H1 (cell line): ENCODE measurements at regions of chr3 and their contacts with region 1.

Region 1: DNA sequence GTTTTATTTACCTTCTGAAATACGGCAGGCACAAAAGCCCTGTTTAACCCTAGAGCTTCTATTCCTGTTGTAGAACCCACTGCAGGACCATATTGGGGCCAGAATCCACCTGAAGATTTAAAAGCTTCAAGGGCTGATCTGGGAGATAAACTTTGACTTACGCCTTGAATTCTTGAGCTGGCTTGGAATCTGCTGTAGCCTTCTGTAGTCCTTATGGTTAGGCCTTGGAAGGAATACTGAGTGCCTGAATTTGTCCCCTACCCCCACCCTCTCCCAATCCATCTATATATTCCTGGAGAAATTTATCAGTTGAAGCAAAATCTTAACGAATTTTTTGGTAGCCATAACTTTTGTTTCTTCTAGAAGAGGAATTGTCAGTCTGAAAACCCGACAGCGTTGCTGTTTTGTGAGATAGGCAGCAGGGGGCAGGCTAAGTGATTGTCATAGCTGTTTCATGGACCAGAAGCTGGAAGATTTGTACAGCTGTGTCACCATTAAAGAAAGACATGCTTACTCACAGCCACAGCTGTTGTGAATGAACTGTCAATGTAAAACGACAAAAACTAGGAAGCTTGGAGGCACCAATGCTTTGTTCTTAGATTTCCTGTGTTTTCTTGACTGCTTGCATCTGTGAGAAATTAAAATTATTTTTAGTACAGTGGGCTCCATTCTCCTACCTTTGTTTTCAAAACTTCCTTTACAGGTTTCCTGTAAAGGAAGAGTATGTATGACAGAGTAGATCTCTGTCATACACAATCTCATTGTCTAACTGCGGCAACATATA is 12.8 kb downstream of the LXN start:
- DNase-seq: peak in 1 of 2 experiments; percentile 64
- H3K4me3 ChIP-seq: no peak overlapping the region
- H3K27ac ChIP-seq: no peak overlapping the region
- H3K4me1 ChIP-seq: no peaks in the 10 kb centered on the region
- H3K27me3 ChIP-seq: no peaks in the 10 kb centered on the region
- CTCF ChIP-seq: peak; percentile 33 to 62 (median 46)
- EP300 ChIP-seq: no peak
- POLR2A ChIP-seq: no peak
- RAD21 ChIP-seq: peak; percentile 16 to 49; a peak in 3 of 4 replicates

Region 2: GRCh38 chr3:158672293-158673176 is 12.9 kb after region 1 on chr3 and contains the start of gene LXN:
- CTCF ChIA-PET with region 1: interaction called, 16 read pairs
- POLR2A ChIA-PET with region 1: no interaction called
- DNase-seq: peak; percentile 85
- H3K4me3 ChIP-seq: peak within 1 kb of the TSS; percentile 46 to 82 (median 80)
- H3K27ac ChIP-seq: peak within 1 kb of the TSS; percentile 64; the same call in 1 of the 2 replicates
- H3K4me1 ChIP-seq: peaks cover 0 to 7% (median 0%) of the 10 kb centered on the region in 4 experiments; a peak in 1 of 7 replicates
- H3K27me3 ChIP-seq: no peaks in the 10 kb centered on the region
- CTCF ChIP-seq: peak; percentile 85 to 99 (median 94)
- EP300 ChIP-seq: no peak
- POLR2A ChIP-seq: peak in 1 of 2 experiments; percentile 77; a peak in 2 of 3 replicates
- RAD21 ChIP-seq: peak; percentile 33 to 60; a peak in 3 of 4 replicates
- total RNA-seq, gene LXN: 3.9 and 4.7 TPM in 2 replicates

Region 3: GRCh38 chr3:158801696-158802408 is 142.2 kb after region 1 on chr3 and contains the start of gene MFSD1:
- CTCF ChIA-PET with region 1: interaction called, 10 read pairs
- POLR2A ChIA-PET with region 1: no interaction called
- DNase-seq: peak in 1 of 2 experiments; percentile 89
- H3K4me3 ChIP-seq: peak within 1 kb of the TSS; percentile 48 to 90 (median 82)
- H3K27ac ChIP-seq: no peak within 1 kb of the TSS
- H3K4me1 ChIP-seq: peaks cover 0 to 9% (median 2%) of the 10 kb centered on the region in 4 experiments; a peak in 2 of 7 replicates
- H3K27me3 ChIP-seq: peaks cover 8 to 18% (median 15%) of the 10 kb centered on the region in 4 experiments
- CTCF ChIP-seq: no peak
- EP300 ChIP-seq: peak in 1 of 2 experiments; percentile 17; a peak in 1 of 3 replicates
- POLR2A ChIP-seq: peak in 1 of 2 experiments; percentile 50; a peak in 2 of 3 replicates
- RAD21 ChIP-seq: no peak
- total RNA-seq, gene MFSD1: 9.3 and 11.0 TPM in 2 replicates